GM12878 (cell line): ENCODE measurements at regions of chrX and their contacts with region 1.

Region 1: GRCh38 chrX:154980330-154981096 is 42.0 kb downstream of the F8 start:
- DNase-seq: peak; percentile 68
- ATAC-seq: peak; percentile 97
- H3K4me3 ChIP-seq: peak overlapping the region; percentile 49; the same call in 1 of the 2 replicates
- H3K27ac ChIP-seq: no peak overlapping the region
- H3K4me1 ChIP-seq: peaks cover 4% of the 10 kb centered on the region; the same call in 1 of the 2 replicates
- H3K27me3 ChIP-seq: no peaks in the 10 kb centered on the region
- CTCF ChIP-seq: peak; percentile 57 to 92 (median 77); a peak in 5 of 6 replicates
- EP300 ChIP-seq: no peak
- POLR2A ChIP-seq: no peak
- RAD21 ChIP-seq: peak; percentile 85

Region 2: GRCh38 chrX:155001873-155002272 is 21.4 kb after region 1 on chrX:
- CTCF ChIA-PET with region 1: no interaction called
- POLR2A ChIA-PET with region 1: no interaction called
- RAD21 ChIA-PET with region 1: no interaction called
- SMC1A ChIA-PET with region 1: no interaction called
- in situ Hi-C with region 1: no loop called
- intact Hi-C with region 1: no loop called
- DNase-seq: no peak
- ATAC-seq: peak; percentile 54
- H3K4me3 ChIP-seq: no peak overlapping the region
- H3K27ac ChIP-seq: no peak overlapping the region
- H3K4me1 ChIP-seq: no peaks in the 10 kb centered on the region
- H3K27me3 ChIP-seq: no peaks in the 10 kb centered on the region
- CTCF ChIP-seq: no peak
- EP300 ChIP-seq: no peak
- POLR2A ChIP-seq: no peak
- RAD21 ChIP-seq: no peak

Region 3: GRCh38 chrX:155056877-155057792 is 76.6 kb after region 1 on chrX:
- CTCF ChIA-PET with region 1: interaction called, 181 read pairs
- POLR2A ChIA-PET with region 1: no interaction called
- RAD21 ChIA-PET with region 1: interaction called, 29 read pairs
- SMC1A ChIA-PET with region 1: interaction called, 145 read pairs
- in situ Hi-C with region 1: loop called (anchors 5 kb)
- intact Hi-C with region 1: loop called (anchors 1 kb)
- DNase-seq: peak; percentile 24
- ATAC-seq: peak; percentile 95
- H3K4me3 ChIP-seq: peak overlapping the region; percentile 24; the same call in 1 of the 2 replicates
- H3K27ac ChIP-seq: no peak overlapping the region; the same call in 1 of the 2 replicates
- H3K4me1 ChIP-seq: no peaks in the 10 kb centered on the region; the same call in 1 of the 2 replicates
- H3K27me3 ChIP-seq: no peaks in the 10 kb centered on the region
- CTCF ChIP-seq: peak; percentile 69 to 77 (median 73)
- EP300 ChIP-seq: no peak
- POLR2A ChIP-seq: no peak
- RAD21 ChIP-seq: peak; percentile 63

Region 4: DNA sequence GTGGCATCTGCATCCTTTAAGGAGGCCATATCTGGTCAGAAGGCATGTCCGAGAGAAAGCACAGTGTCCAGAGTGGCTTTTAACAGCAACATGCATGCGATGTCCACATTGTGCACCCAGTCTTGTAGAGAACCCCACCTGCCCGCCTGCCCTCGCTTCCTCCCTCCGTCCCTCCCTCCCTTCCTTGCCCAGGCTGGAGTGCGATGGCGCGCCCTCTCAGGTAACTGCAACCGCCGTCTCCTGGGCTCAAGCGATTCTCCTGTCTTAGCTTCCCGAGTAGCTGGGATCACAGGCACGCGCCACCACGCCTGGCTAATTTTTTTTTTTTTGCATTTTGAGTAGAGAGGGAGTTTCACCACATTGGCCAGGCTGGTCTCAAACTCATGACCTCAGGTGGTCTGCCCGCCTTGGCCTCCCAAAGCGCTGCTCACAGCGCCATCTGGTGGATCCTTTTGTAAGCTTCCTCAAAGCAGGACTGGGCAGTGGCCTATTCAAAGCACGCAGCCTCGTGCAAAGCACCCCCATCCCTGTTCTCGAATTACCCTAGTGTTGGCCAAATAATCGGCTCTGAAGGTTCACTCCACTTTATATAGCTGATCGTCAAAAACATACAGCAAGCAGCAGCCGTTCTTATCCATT is 105.8 kb after region 1 on chrX:
- CTCF ChIA-PET with region 1: interaction called, 5 read pairs
- POLR2A ChIA-PET with region 1: no interaction called
- RAD21 ChIA-PET with region 1: no interaction called
- SMC1A ChIA-PET with region 1: interaction called, 8 read pairs
- in situ Hi-C with region 1: no loop called
- intact Hi-C with region 1: loop called (anchors 1 kb)
- DNase-seq: no peak
- ATAC-seq: peak; percentile 80
- H3K4me3 ChIP-seq: no peak overlapping the region
- H3K27ac ChIP-seq: no peak overlapping the region
- H3K4me1 ChIP-seq: no peaks in the 10 kb centered on the region
- H3K27me3 ChIP-seq: no peaks in the 10 kb centered on the region
- CTCF ChIP-seq: peak; percentile 37 to 56 (median 44); a peak in 4 of 6 replicates
- EP300 ChIP-seq: no peak
- POLR2A ChIP-seq: no peak
- RAD21 ChIP-seq: peak; percentile 45; the same call in 1 of the 2 replicates

Region 5: DNA sequence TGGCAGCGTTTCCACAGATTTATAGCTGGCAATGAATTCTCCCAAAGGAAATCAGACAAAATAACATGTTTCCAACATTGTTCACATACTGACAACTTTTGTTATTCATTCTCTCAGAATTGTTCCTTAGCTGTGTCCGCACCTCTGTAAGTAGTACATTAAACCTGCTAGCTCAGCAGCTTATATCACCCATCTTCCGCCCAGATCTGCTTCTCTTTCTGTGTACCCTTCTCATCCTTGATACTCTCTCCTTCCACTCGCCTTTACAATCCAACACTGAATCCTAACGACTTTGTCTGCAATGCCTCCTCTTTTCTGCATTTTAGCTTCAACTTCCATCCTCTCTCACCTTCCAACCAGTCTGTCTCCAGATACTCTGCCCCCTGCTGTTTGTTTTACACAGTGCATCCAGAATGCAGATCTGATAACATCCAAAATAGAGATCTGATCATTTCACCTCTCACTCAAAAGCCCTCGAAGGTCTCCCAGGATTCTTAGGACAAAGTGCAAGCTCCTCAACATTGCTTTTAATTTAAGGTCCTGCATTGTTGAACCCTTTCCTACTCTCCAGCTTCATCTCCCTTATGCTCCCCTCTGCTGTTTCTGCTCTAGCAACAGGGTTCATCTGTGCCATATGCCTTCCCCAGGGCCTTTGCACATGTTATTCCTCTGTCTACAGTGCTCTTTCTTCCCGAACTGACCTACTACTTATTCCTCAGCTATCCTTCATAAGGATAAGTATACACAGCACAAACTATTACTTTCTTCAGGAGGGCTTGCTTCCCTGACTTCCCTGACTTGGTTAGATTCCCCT is 168.4 kb after region 1 on chrX:
- CTCF ChIA-PET with region 1: interaction called, 6 read pairs
- POLR2A ChIA-PET with region 1: no interaction called
- RAD21 ChIA-PET with region 1: interaction called, 4 read pairs
- SMC1A ChIA-PET with region 1: interaction called, 7 read pairs
- in situ Hi-C with region 1: no loop called
- intact Hi-C with region 1: loop called (anchors 1 kb)
- DNase-seq: no peak
- ATAC-seq: peak; percentile 72
- H3K4me3 ChIP-seq: no peak overlapping the region
- H3K27ac ChIP-seq: no peak overlapping the region
- H3K4me1 ChIP-seq: no peaks in the 10 kb centered on the region
- H3K27me3 ChIP-seq: no peaks in the 10 kb centered on the region
- CTCF ChIP-seq: peak; percentile 39 to 54 (median 52); a peak in 5 of 6 replicates
- EP300 ChIP-seq: no peak
- POLR2A ChIP-seq: no peak
- RAD21 ChIP-seq: peak; percentile 41; the same call in 1 of the 2 replicates

Region 6: DNA sequence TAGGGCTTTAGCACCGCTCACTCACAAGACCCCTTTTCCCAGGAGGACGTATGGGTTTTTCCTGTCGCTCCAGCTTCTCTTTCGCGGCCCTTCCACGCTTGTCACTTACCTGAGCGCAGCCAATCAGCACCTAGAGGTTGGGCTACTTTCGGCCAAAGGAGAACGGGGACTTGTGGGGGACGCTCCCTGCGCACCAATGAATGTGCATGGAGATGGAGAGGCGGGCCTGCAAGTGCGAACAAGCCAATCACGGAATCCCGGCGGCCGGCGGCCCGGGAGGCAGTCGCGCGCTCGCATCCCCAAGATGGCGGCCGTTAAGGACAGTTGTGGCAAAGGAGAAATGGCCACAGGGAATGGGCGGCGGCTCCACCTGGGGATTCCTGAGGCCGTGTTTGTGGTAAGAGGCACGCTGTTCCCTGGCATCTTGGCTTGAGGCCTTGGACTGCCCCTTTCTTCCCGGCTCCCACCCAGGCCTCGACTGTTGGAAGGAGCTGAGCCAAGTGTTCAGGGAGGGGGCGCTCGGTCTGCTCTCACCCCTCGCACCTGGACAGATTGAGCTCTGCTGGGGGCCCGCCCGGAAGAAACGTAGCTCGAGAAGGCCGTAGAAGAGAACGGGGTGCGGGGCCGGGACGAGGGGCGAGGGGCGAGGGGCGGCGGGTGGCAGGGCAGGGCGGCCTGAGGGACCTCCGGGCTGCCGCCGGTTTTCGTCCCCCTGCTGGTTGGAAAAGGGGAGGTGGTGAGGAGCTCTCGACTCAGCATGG is 235.8 kb after region 1 on chrX and contains the start of gene VBP1:
- CTCF ChIA-PET with region 1: no interaction called
- POLR2A ChIA-PET with region 1: no interaction called
- RAD21 ChIA-PET with region 1: no interaction called
- SMC1A ChIA-PET with region 1: no interaction called
- in situ Hi-C with region 1: loop called (anchors 5 kb)
- intact Hi-C with region 1: loop called (anchors 10 kb)
- DNase-seq: peak; percentile 84
- ATAC-seq: peak; percentile 97
- H3K4me3 ChIP-seq: peak within 1 kb of the TSS; percentile 67
- H3K27ac ChIP-seq: peak within 1 kb of the TSS; percentile 82
- H3K4me1 ChIP-seq: no peaks in the 10 kb centered on the region
- H3K27me3 ChIP-seq: no peaks in the 10 kb centered on the region
- CTCF ChIP-seq: peak in 2 of 3 experiments; percentile 25 to 31; a peak in 3 of 6 replicates
- EP300 ChIP-seq: no peak
- POLR2A ChIP-seq: peak; percentile 88
- RAD21 ChIP-seq: no peak
- polyA plus RNA-seq, gene VBP1: 140 to 182 TPM

Region 7: DNA sequence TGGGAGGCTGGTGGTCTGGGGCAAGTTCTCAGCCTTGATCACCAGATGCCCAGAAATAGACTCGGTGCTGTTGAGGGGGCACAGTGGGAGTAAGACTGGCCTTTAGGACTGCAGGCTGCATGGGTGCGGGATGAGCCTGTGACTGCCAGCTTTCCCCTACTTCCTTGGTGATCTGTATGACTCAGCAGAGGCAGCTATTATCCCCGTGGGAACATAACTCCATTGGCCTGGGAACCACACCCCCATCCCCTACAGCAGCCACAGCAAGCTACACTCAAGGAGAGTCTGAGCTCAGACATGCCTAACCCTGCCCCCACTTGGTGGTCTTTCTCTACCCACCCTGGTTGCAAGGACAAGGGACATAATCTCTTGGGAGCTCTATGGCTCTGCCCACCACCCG is 333.3 kb after region 1 on chrX:
- CTCF ChIA-PET with region 1: no interaction called
- POLR2A ChIA-PET with region 1: no interaction called
- RAD21 ChIA-PET with region 1: no interaction called
- SMC1A ChIA-PET with region 1: no interaction called
- in situ Hi-C with region 1: no loop called
- intact Hi-C with region 1: no loop called
- DNase-seq: no peak
- ATAC-seq: no peak
- H3K4me3 ChIP-seq: no peak overlapping the region
- H3K27ac ChIP-seq: no peak overlapping the region
- H3K4me1 ChIP-seq: no peaks in the 10 kb centered on the region
- H3K27me3 ChIP-seq: no peaks in the 10 kb centered on the region
- CTCF ChIP-seq: no peak
- EP300 ChIP-seq: no peak
- POLR2A ChIP-seq: no peak
- RAD21 ChIP-seq: no peak

Region 8: GRCh38 chrX:155819966-155820491 is 839.5 kb after region 1 on chrX:
- CTCF ChIA-PET with region 1: no interaction called
- POLR2A ChIA-PET with region 1: no interaction called
- RAD21 ChIA-PET with region 1: no interaction called
- SMC1A ChIA-PET with region 1: no interaction called
- in situ Hi-C with region 1: no loop called
- intact Hi-C with region 1: loop called (anchors 5 kb)
- DNase-seq: peak; percentile 11
- ATAC-seq: peak; percentile 83
- H3K4me3 ChIP-seq: no peak overlapping the region
- H3K27ac ChIP-seq: no peak overlapping the region
- H3K4me1 ChIP-seq: no peaks in the 10 kb centered on the region
- H3K27me3 ChIP-seq: no peaks in the 10 kb centered on the region
- CTCF ChIP-seq: peak; percentile 51 to 64 (median 51); a peak in 5 of 6 replicates
- EP300 ChIP-seq: no peak
- POLR2A ChIP-seq: no peak
- RAD21 ChIP-seq: peak; percentile 92